K562 (cell line): ENCODE measurements at regions of chr15 and their contacts with region 1.

Region 1: GRCh38 chr15:72599855-72600464 is 54.5 kb upstream of the GOLGA6B start:
- DNase-seq: peak; percentile 52 to 68 (median 54)
- ATAC-seq: peak; percentile 88
- H3K4me3 ChIP-seq: no peak overlapping the region
- H3K27ac ChIP-seq: no peak overlapping the region
- H3K4me1 ChIP-seq: no peaks in the 10 kb centered on the region
- H3K27me3 ChIP-seq: peaks cover 0 to 7% of the 10 kb centered on the region in 2 experiments; a peak in 1 of 5 replicates
- CTCF ChIP-seq: peak; percentile 61 to 73 (median 66)
- EP300 ChIP-seq: no peak
- POLR2A ChIP-seq: no peak
- RAD21 ChIP-seq: peak; percentile 57 to 76

Region 2: DNA sequence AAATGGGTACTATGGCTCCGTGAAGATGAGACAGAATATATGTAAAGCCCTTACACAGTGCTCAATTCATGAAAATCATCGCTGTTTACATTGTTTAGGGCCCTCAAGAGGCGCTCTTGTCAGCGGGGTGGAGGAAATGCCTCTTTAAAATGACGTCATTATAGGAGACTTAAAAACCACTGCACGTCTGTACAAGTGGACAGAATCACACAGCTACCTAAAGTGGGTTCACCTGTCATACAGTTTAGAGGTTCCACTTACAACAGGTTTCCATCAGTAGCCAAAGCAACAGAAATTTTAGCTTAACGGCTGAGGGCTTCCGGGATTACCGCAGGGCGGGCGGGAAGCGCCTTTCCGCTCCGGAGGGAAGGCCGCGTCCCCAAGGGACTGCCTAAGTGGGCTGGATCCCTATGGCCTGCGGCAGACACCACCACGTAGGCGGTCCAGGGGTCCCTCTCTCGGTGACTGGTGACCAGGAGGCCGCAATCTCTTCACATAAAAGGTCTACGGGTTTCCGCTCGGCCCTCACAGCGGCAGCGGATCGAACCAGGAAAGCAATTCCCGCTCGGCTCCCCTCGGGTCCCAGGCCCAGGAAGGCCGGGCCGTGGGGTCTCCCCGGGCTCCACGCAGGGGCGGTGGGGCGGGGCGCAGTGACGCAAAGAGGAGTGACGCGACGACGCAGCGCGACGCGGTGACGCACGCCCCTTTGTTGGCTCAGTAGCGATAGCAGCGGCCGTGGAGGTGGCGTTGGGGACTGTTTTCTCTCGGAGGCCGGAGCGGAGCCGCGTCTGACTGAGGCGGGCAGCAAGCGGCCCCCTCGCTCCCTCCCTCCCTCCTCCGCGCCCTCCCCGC is 126.1 kb before region 1 on chr15 and contains the start of gene ARIH1:
- CTCF ChIA-PET with region 1: no interaction called
- POLR2A ChIA-PET with region 1: no interaction called
- in situ Hi-C with region 1: no loop called
- intact Hi-C with region 1: loop called (anchors 10 kb)
- DNase-seq: peak; percentile 89 to 97 (median 90)
- ATAC-seq: peak; percentile 91
- H3K4me3 ChIP-seq: peak within 1 kb of the TSS; percentile 76
- H3K27ac ChIP-seq: peak within 1 kb of the TSS; percentile 96
- H3K4me1 ChIP-seq: peaks cover 7 to 15% of the 10 kb centered on the region in 2 experiments; a peak in 4 of 5 replicates
- H3K27me3 ChIP-seq: no peaks in the 10 kb centered on the region
- CTCF ChIP-seq: peak; percentile 45 to 74 (median 63)
- EP300 ChIP-seq: no peak
- POLR2A ChIP-seq: peak; percentile 97
- RAD21 ChIP-seq: peak in 1 of 2 experiments; percentile 39; a peak in 1 of 4 replicates
- polyA plus RNA-seq, gene ARIH1: 17.7 to 18.0 TPM

Region 3: DNA sequence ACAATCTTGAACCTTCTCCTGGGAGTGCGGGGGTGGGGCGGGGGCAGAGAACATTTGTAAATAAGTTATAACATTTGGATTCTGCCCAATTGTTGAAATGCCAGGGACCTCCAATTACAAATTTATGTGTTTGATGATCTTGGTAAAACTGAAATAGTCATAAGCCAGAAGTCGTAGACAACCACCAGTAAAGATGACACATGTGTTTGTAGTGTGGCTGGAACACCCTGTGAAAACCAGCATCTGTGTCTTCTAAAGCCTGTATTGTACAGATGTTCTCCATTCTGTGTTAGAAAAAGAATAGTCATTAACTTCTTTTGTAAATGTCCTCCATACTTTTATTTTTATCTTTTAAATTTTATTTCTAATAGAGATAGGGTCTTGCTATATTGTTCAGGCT is 64.0 kb before region 1 on chr15:
- CTCF ChIA-PET with region 1: no interaction called
- POLR2A ChIA-PET with region 1: no interaction called
- in situ Hi-C with region 1: no loop called
- intact Hi-C with region 1: no loop called
- DNase-seq: no peak
- ATAC-seq: no peak
- H3K4me3 ChIP-seq: no peak overlapping the region
- H3K27ac ChIP-seq: no peak overlapping the region
- H3K4me1 ChIP-seq: no peaks in the 10 kb centered on the region
- H3K27me3 ChIP-seq: no peaks in the 10 kb centered on the region
- CTCF ChIP-seq: no peak
- EP300 ChIP-seq: no peak
- POLR2A ChIP-seq: no peak
- RAD21 ChIP-seq: no peak

Region 4: GRCh38 chr15:72671535-72671934 is 71.6 kb after region 1 on chr15:
- CTCF ChIA-PET with region 1: no interaction called
- POLR2A ChIA-PET with region 1: no interaction called
- in situ Hi-C with region 1: no loop called
- intact Hi-C with region 1: loop called (anchors 10 kb)
- DNase-seq: no peak
- ATAC-seq: no peak; the same call in 2 of the 3 replicates
- H3K4me3 ChIP-seq: no peak overlapping the region
- H3K27ac ChIP-seq: no peak overlapping the region
- H3K4me1 ChIP-seq: peaks cover 0 to 3% of the 10 kb centered on the region in 2 experiments; a peak in 2 of 5 replicates
- H3K27me3 ChIP-seq: peaks cover 14 to 16% of the 10 kb centered on the region in 2 experiments; a peak in 3 of 5 replicates
- CTCF ChIP-seq: no peak
- EP300 ChIP-seq: no peak
- POLR2A ChIP-seq: no peak
- RAD21 ChIP-seq: no peak

Region 5: DNA sequence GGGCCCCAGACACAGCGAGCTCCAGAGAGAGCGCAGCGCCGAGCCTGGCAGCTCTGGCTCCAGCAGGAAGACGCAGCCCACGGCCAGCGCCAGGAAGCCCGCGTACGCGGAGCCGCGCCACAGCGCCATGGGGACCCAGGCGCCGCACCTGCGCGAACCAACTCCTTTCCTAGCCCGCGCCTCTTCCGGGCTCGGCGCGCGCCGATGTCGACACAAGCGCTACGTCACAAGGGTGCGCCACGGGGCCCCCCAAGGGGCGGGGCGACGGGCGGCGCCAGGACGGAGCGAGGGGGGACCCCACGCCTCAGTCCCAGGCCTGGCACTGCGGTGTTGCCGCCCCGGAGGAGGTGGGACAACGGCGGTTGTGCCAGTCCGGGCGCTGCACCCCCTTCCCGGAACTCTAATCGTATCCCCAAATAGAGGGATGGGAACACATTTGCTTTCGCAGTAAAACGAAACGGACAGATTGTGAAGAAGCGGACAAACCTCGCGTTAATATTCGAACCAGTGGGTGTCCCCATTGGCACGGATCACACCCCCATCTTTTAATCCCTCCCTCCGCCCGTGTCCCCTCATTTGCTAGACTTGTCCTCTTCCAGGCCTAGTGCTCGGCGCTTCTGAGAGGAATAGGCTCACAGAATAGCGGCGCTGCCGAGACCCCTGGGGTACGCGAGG is 183.7 kb after region 1 on chr15 and contains the start of gene ADPGK:
- CTCF ChIA-PET with region 1: no interaction called
- POLR2A ChIA-PET with region 1: no interaction called
- in situ Hi-C with region 1: no loop called
- intact Hi-C with region 1: loop called (anchors 1 kb)
- DNase-seq: peak; percentile 93 to 98 (median 98)
- ATAC-seq: peak; percentile 91
- H3K4me3 ChIP-seq: peak within 1 kb of the TSS; percentile 98
- H3K27ac ChIP-seq: peak within 1 kb of the TSS; percentile 92
- H3K4me1 ChIP-seq: peaks cover 11 to 13% of the 10 kb centered on the region in 2 experiments; a peak in 4 of 5 replicates
- H3K27me3 ChIP-seq: no peaks in the 10 kb centered on the region
- CTCF ChIP-seq: no peak
- EP300 ChIP-seq: peak; percentile 59
- POLR2A ChIP-seq: peak; percentile 92
- RAD21 ChIP-seq: no peak
- polyA plus RNA-seq, gene ADPGK: 13.4 to 16.0 TPM

Region 6: DNA sequence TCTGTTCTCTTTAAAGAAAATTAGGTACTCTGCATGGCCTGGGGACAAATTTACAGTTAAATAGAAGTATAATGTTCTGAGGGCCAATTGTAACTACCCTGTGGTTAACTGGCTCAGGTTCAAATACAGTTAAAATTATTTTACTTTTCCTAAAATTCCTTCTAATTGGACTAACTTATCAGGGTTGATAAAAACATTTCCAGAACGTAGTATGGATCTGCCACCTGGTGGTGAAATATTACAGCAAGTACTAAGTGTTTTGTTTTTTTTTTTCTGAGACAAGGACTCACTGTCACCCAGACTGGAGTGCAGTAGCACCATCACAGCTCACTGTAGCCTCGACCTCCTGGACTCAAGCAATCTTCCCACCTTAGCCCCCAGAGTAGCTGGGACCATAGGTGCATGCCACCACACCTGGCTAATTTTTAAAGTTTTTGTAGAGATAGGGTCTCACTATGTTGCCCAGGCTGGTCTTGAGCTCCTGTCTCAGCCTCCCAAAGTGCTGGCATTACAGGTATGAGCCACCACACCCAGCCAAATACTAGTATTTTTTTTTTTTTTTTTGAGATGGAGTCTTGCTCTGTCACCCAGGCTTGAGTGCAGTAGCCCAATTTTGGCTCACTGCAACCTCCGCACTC is 481.5 kb after region 1 on chr15:
- CTCF ChIA-PET with region 1: interaction called, 9 read pairs
- POLR2A ChIA-PET with region 1: no interaction called
- in situ Hi-C with region 1: no loop called
- intact Hi-C with region 1: loop called (anchors 2 kb)
- DNase-seq: peak; percentile 8 to 51 (median 10)
- ATAC-seq: peak; percentile 46; the same call in 1 of the 3 replicates
- H3K4me3 ChIP-seq: no peak overlapping the region
- H3K27ac ChIP-seq: no peak overlapping the region
- H3K4me1 ChIP-seq: no peaks in the 10 kb centered on the region
- H3K27me3 ChIP-seq: no peaks in the 10 kb centered on the region
- CTCF ChIP-seq: peak; percentile 40 to 71 (median 52); a peak in 4 of 6 replicates
- EP300 ChIP-seq: no peak
- POLR2A ChIP-seq: no peak
- RAD21 ChIP-seq: peak; percentile 62 to 78

Region 7: DNA sequence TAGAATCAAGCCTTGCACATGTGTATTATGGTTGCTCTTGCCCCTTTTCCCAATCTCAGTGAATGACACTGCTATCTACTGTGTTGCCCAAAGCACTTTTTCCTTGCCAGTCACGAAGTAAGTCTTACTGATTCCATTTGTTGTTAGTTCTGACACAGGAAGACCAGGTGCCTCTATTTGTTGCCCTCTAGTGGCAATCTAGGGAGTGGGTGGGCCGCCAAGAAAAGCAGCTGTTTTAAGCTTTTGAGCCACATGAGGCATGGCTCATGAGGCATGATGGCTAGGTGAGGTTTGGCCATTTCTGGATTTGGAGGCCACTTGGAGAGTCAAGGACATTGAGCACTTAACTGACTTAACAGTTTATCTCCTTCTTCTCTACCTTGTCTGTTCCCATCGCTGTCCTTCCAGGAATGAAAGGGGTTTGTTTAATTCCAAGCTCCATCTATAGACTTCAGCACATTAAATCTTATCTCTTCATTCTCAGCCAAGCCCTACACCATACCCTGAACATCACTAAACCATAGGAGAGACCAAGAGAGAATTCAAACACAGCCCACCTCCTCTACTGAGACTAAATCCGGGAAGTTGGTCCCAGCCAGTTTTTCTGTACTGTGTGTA is 665.7 kb after region 1 on chr15:
- CTCF ChIA-PET with region 1: no interaction called
- POLR2A ChIA-PET with region 1: no interaction called
- in situ Hi-C with region 1: loop called (anchors 10 kb)
- intact Hi-C with region 1: loop called (anchors 5 kb)
- DNase-seq: peak; percentile 45 to 65 (median 55)
- ATAC-seq: peak; percentile 94
- H3K4me3 ChIP-seq: no peak overlapping the region
- H3K27ac ChIP-seq: no peak overlapping the region
- H3K4me1 ChIP-seq: no peaks in the 10 kb centered on the region
- H3K27me3 ChIP-seq: peaks cover 0 to 3% of the 10 kb centered on the region in 2 experiments; a peak in 1 of 5 replicates
- CTCF ChIP-seq: peak; percentile 82 to 90 (median 85)
- EP300 ChIP-seq: no peak
- POLR2A ChIP-seq: no peak
- RAD21 ChIP-seq: peak; percentile 47 to 61

Region 8: DNA sequence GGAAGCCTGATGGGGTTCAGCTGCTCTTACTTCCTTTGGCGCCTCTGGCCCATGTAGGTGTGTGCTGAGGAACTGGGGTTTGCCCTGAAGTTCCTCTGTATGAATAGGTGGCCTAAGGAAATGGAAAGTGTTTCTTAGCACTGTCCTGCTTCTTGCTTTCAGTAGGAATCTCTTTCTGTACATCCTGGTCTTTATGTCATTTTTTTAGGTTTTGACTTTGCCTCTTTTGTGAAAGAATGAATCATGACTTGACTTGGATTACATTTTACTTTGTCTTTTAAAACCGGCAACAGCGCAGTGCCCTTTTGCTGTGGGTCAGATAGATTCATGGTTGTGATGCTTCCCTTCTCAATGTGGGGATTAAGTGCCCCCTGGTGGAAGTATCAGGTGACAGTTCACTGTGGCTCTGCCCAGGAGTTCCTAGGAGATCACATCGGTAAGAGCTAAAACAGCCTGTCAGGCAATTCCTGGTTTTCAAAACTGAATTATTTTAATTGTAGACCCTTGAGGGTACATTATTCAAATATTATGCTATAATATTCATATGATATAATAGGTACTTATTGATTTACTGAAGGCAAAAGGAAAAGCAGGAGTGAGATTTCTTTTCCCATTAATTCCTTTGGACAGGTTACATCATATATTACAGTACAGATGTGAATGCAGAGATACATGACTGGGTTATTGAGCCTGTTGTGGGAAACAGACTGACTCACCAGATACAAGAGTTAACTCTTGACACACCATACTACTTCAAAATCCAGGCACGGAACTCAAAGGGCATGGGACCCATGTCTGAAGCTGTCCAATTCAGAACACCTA is 673.4 kb after region 1 on chr15:
- CTCF ChIA-PET with region 1: no interaction called
- POLR2A ChIA-PET with region 1: no interaction called
- in situ Hi-C with region 1: loop called (anchors 10 kb)
- intact Hi-C with region 1: loop called (anchors 5 kb)
- DNase-seq: peak; percentile 54 to 59 (median 59)
- ATAC-seq: peak; percentile 92
- H3K4me3 ChIP-seq: no peak overlapping the region
- H3K27ac ChIP-seq: no peak overlapping the region
- H3K4me1 ChIP-seq: no peaks in the 10 kb centered on the region
- H3K27me3 ChIP-seq: peaks cover under 1 to 2% of the 10 kb centered on the region in 2 experiments; a peak in 1 of 5 replicates
- CTCF ChIP-seq: peak; percentile 67 to 73 (median 70)
- EP300 ChIP-seq: no peak
- POLR2A ChIP-seq: no peak
- RAD21 ChIP-seq: peak; percentile 60 to 80